ENCODE measurements at regions of chr5 and their contacts with region 1.

Region 1: DNA sequence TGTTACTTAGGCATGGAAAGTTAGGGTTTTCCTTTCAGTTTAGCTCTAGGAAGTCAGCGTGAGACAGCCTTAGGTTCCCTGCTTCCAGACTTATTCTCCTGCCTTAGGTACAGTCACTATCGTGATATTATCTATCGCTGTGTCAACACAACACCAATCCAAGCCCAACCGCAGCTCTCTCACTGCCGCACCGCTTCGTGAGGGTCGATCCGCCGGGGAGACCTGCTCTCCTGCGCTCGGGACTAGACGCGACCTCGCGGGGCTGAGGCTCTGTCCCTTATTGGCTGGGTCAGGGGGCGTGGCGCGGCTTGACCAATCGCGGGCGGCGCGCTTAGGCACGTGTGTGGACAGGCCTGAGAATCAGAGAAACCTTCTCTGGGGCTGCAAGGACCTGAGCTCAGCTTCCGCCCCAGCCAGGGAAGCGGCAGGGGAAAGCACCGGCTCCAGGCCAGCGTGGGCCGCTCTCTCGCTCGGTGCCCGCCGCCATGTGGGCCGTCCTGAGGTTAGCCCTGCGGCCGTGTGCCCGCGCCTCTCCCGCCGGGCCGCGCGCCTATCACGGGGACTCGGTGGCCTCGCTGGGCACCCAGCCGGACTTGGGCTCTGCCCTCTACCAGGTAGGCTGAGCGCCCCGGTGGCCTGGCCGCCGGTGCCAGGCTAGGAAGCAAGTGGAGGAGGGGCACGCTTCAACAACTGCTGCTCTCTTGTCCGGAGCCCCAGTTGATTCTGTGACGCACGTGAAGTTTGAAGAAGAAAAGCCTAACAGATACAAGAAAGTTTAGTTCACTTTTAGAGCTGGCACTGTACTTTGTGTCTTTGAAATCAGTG is at the start of gene MCCC2:
- DNase-seq: peak; percentile 68
- H3K4me3 ChIP-seq: peak within 1 kb of the TSS; percentile 79
- H3K27me3 ChIP-seq: no peaks in the 10 kb centered on the region
- CTCF ChIP-seq: no peak
- polyA plus RNA-seq, gene MCCC2: 16.2 and 24.1 TPM in 2 replicates

Region 2: DNA sequence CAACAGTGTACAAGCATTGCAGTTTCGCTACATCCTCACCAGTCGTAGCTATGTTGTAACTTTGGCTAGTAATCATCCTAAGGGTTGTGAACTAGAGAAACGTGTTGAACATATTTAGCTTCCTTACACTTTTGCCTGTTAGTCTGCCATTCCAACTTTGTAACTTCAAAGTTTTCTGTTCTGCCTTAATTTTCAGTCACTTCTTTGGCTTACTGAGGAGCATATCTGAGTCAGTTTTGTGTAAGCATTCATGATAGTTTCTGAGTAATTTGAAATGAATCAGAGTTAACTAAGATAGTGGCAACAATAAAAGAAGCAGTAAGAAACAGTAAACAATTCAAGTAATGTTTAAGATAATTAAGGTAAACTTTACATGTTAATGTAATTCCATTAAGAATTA is 58.9 kb before region 1 on chr5:
- CTCF ChIA-PET with region 1: no interaction called
- POLR2A ChIA-PET with region 1: no interaction called
- DNase-seq: no peak
- H3K4me3 ChIP-seq: no peak overlapping the region
- H3K27me3 ChIP-seq: no peaks in the 10 kb centered on the region
- CTCF ChIP-seq: no peak

Region 3: DNA sequence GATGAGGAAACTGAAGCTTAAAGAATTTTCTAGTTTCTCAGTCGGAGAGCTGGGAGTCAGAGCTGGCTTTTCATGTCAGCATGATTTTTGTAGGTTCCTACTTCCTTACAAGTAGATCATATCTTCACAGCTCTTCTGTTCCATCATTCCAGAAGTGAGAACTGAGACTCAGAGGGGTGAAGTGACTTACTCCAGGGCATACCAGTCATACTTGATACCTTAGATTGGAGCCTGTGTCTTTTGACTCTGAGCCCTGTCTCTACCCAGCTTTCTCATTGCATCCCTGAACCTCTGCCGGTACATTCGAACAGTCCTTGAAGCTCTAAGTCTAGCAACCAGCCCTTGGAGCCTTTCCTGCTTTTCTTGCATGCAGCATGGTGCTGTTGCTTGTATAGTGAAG is 53.3 kb after region 1 on chr5:
- CTCF ChIA-PET with region 1: no interaction called
- POLR2A ChIA-PET with region 1: interaction called, 15 read pairs
- DNase-seq: no peak
- H3K4me3 ChIP-seq: no peak overlapping the region
- H3K27me3 ChIP-seq: no peaks in the 10 kb centered on the region
- CTCF ChIP-seq: no peak

Measured in BJ (cell line).